ENCODE measurements at regions of chr4 and their contacts with region 1.

Region 1: DNA sequence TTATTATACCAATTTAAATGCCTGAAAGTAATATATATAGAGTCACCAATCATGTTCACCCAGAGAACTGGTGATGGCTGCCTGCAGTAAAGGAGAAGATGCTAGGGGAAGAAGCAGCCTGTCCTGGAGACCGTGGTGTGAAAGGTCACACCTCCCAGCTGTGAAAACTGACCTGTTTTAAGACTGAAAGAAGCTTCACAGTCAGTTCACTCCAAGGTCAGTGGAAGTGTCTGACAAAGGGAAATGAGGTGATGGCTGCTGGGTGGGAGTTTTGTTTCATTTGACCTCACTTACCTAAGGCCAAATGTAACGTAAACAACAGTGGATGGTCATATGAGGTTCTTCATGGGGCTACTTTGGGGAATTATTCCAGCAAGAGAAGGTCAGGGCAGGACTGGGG is 352.1 kb upstream of the GATB start:
- DNase-seq: no peak
- ATAC-seq: peak; percentile 25
- H3K4me3 ChIP-seq: no peak overlapping the region
- H3K4me3 Mint-ChIP-seq: peak overlapping the region in 1 of 10 donors; percentile 1
- H3K27ac ChIP-seq: no peak overlapping the region
- H3K27ac Mint-ChIP-seq: peak overlapping the region; percentile 4 to 100 (median 91)
- H3K4me1 ChIP-seq: peaks cover 29 to 70% of the 10 kb centered on the region in 2 donors
- H3K4me1 Mint-ChIP-seq: peaks cover 60 to 96% (median 92%) of the 10 kb centered on the region in 7 donors
- H3K27me3 ChIP-seq: no peaks in the 10 kb centered on the region
- H3K27me3 Mint-ChIP-seq: no peaks in the 10 kb centered on the region

Region 2: GRCh38 chr4:152132776-152133175 is 19.9 kb after region 1 on chr4:
- CTCF ChIA-PET with region 1: interaction called, 3 read pairs
- POLR2A ChIA-PET with region 1: interaction called, 6 read pairs
- intact Hi-C with region 1: loop called in 1 of 2 experiments (anchors 2 kb)
- DNase-seq: no peak
- ATAC-seq: no peak
- H3K4me3 ChIP-seq: no peak overlapping the region
- H3K4me3 Mint-ChIP-seq: no peak overlapping the region
- H3K27ac ChIP-seq: no peak overlapping the region
- H3K27ac Mint-ChIP-seq: peak overlapping the region in 1 of 9 donors; percentile 29
- H3K4me1 ChIP-seq: peaks cover 0 to 3% of the 10 kb centered on the region in 2 donors
- H3K4me1 Mint-ChIP-seq: peaks cover 6 to 35% (median 25%) of the 10 kb centered on the region in 7 donors
- H3K27me3 ChIP-seq: no peaks in the 10 kb centered on the region
- H3K27me3 Mint-ChIP-seq: no peaks in the 10 kb centered on the region

Region 3: GRCh38 chr4:152161676-152162330 is 48.9 kb after region 1 on chr4:
- CTCF ChIA-PET with region 1: no interaction called
- POLR2A ChIA-PET with region 1: no interaction called
- intact Hi-C with region 1: loop called in 1 of 2 experiments (anchors 5 kb)
- DNase-seq: no peak
- ATAC-seq: no peak
- H3K4me3 ChIP-seq: no peak overlapping the region
- H3K4me3 Mint-ChIP-seq: no peak overlapping the region
- H3K27ac ChIP-seq: no peak overlapping the region
- H3K27ac Mint-ChIP-seq: peak overlapping the region in 1 of 9 donors; percentile 9
- H3K4me1 ChIP-seq: peaks cover 0 to 4% of the 10 kb centered on the region in 2 donors
- H3K4me1 Mint-ChIP-seq: peaks cover 7 to 37% (median 26%) of the 10 kb centered on the region in 7 donors
- H3K27me3 ChIP-seq: no peaks in the 10 kb centered on the region
- H3K27me3 Mint-ChIP-seq: peaks cover 0 to 26% (median 0%) of the 10 kb centered on the region in 5 donors

Region 4: GRCh38 chr4:152454398-152455011 is 341.6 kb after region 1 on chr4:
- CTCF ChIA-PET with region 1: no interaction called
- POLR2A ChIA-PET with region 1: no interaction called
- intact Hi-C with region 1: no loop called
- DNase-seq: peak in 2 of 9 donors; percentile 6 to 7
- ATAC-seq: no peak
- H3K4me3 ChIP-seq: no peak overlapping the region
- H3K4me3 Mint-ChIP-seq: no peak overlapping the region
- H3K27ac ChIP-seq: no peak overlapping the region
- H3K27ac Mint-ChIP-seq: no peak overlapping the region
- H3K4me1 ChIP-seq: peaks cover 5 to 9% of the 10 kb centered on the region in 2 donors
- H3K4me1 Mint-ChIP-seq: peaks cover 30 to 53% (median 41%) of the 10 kb centered on the region in 7 donors
- H3K27me3 ChIP-seq: no peaks in the 10 kb centered on the region
- H3K27me3 Mint-ChIP-seq: no peaks in the 10 kb centered on the region

Measured in naive thymus-derived CD4-positive, alpha-beta T cell (primary cell).